ENCODE measurements at regions of chr11 and their contacts with region 1.

Region 1: GRCh38 chr11:15074206-15075161 is 1.1 kb downstream of the CALCB start:
- DNase-seq: peak; percentile 87
- H3K4me3 Mint-ChIP-seq: peak overlapping the region; percentile 4
- H3K27ac Mint-ChIP-seq: no peak overlapping the region
- H3K4me1 Mint-ChIP-seq: peaks cover 6% of the 10 kb centered on the region
- H3K27me3 Mint-ChIP-seq: no peaks in the 10 kb centered on the region
- CTCF ChIP-seq: peak; percentile 84

Region 2: DNA sequence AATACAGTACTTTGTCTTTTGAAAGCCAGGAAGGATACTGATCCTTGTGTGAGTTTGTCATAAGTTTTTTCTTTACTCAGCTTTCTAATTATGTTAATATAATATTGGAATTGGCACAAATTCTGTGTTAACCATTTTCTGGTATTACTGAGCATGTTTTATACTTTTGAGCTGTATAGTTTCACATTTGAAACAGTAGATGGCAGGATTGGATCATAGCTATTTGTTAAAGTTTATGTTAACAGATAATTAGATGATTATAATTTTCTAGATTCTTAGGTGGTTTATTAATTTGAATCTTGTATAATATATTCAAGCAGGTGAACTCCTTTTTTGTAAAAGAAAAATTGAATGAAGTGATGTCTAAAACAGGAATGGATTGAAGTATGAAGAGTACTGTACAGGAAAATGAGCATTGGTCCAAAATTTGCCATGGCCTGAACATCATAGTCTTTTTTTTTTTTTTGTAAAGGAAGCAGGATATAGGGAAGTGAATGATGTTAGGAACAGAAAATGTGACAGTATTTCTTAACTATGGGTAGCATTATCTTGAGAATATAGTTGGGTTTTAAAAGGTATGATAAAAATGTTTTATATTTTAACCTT is 284.5 kb before region 1 on chr11:
- CTCF ChIA-PET with region 1: interaction called, 76 read pairs
- POLR2A ChIA-PET with region 1: interaction called, 3 read pairs
- intact Hi-C with region 1: loop called (anchors 2 kb)
- DNase-seq: peak; percentile 21
- H3K4me3 Mint-ChIP-seq: no peak overlapping the region
- H3K27ac Mint-ChIP-seq: no peak overlapping the region
- H3K4me1 Mint-ChIP-seq: no peaks in the 10 kb centered on the region
- H3K27me3 Mint-ChIP-seq: peaks cover 27% of the 10 kb centered on the region
- CTCF ChIP-seq: peak; percentile 45

Region 3: DNA sequence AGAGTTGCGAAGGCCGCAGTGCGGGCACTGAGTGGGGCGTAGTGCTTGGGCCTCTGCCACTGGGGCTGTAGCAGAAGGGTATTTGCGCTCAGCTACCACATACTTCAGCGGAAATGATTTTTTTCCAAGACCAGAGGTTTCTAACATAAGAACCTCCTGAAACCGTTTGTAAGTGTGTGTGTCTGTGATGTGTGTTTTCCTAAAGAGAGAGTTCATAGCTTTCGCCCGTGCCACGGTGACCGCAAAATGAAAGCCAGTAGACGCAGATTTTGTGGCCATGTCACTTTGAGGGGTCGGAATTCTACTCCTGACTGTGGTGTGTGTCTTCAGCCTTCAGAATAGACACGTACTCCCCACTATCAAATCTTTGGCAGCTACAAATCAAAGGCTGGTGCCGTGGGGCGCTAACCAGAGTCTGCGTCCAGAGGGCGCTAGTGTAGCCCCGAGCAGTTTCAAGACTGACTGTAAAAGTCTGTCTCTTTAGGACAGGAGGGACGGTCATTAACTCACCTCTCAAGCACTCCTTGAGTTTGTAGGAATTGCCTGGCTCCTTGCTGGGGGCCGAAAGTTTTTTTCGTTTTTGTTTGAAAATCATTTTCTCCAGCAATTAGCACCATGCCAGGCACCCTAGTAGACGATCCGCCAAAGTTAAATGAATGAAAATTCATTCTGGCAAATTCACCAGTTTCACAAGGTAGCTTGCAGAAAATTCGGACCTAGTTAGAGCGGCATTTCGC is 99.8 kb before region 1 on chr11:
- CTCF ChIA-PET with region 1: interaction called, 6 read pairs
- POLR2A ChIA-PET with region 1: no interaction called
- intact Hi-C with region 1: loop called (anchors 1 kb)
- DNase-seq: peak; percentile 49
- H3K4me3 Mint-ChIP-seq: no peak overlapping the region
- H3K27ac Mint-ChIP-seq: no peak overlapping the region
- H3K4me1 Mint-ChIP-seq: no peaks in the 10 kb centered on the region
- H3K27me3 Mint-ChIP-seq: peaks cover 22% of the 10 kb centered on the region
- CTCF ChIP-seq: peak; percentile 52

Region 4: GRCh38 chr11:15053191-15053685 is 21.2 kb before region 1 on chr11:
- CTCF ChIA-PET with region 1: interaction called, 22 read pairs
- POLR2A ChIA-PET with region 1: no interaction called
- intact Hi-C with region 1: loop called (anchors 1 kb)
- DNase-seq: peak; percentile 94
- H3K4me3 Mint-ChIP-seq: peak overlapping the region; percentile 7
- H3K27ac Mint-ChIP-seq: peak overlapping the region; percentile 53
- H3K4me1 Mint-ChIP-seq: peaks cover 18% of the 10 kb centered on the region
- H3K27me3 Mint-ChIP-seq: no peaks in the 10 kb centered on the region
- CTCF ChIP-seq: no peak

Region 5: DNA sequence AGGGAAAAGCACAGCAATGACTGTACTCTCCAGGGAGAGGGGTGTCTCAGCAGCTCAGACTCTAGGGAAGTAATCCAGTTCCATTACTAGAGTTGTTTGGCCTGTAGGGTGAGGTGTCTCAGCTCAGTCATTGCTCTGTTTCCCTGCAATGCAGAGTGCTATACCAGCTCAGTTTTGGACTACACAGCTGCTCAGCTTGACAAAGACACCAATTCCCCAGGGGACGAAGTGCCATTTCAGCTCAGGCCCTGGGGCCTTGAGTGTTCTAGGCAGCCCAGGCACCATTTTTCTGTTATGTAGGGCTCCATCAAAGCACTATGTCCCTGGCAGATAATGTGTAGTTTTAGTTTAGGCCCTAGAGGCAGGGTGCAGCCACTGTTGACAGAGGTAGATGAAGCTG is 17.1 kb after region 1 on chr11:
- CTCF ChIA-PET with region 1: interaction called, 12 read pairs
- POLR2A ChIA-PET with region 1: interaction called, 3 read pairs
- intact Hi-C with region 1: no loop called
- DNase-seq: no peak
- H3K4me3 Mint-ChIP-seq: no peak overlapping the region
- H3K27ac Mint-ChIP-seq: no peak overlapping the region
- H3K4me1 Mint-ChIP-seq: peaks cover 12% of the 10 kb centered on the region
- H3K27me3 Mint-ChIP-seq: no peaks in the 10 kb centered on the region
- CTCF ChIP-seq: no peak

Region 6: DNA sequence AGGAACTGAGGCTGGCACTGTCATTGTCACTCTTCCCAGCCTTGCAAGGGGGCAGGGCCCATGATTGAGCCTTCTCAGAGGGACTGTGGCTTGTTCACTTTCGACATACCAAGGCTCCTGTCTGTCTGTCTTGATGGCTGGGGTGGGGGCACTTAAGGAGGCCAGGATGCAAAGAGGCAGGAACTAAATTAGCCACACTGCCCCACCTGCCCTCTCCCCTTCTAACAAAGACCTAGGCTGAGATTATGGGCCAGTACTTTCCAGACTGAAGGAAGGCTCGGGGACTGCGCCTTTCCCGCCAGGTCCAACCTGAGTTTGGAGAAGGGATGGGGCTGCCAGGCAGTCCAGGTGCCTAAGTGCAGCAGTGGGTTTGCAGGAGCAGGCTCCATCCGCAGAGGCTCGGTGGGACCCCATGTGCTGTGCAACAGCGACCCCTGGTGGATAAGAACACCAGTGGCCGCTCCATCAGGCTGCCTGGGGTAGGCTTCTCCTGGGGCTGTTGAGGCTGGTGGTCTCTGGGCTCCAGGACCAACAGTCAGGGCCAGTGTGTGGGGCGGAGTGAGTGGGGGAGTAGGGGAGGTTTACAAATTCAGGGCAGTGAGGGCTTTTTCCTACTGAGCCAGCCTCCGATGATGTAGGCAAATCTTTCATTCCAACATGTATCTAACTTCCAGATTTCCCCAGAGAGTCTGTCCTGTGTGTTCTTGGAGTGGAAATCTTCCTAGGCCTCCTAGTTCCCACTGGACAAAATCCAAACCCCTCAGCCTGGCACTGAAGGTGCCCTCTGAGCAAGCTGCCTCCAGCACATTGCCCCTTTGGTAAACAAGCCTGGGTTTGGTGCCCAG is 134.1 kb after region 1 on chr11:
- CTCF ChIA-PET with region 1: interaction called, 10 read pairs
- POLR2A ChIA-PET with region 1: no interaction called
- intact Hi-C with region 1: loop called (anchors 1 kb)
- DNase-seq: peak; percentile 71
- H3K4me3 Mint-ChIP-seq: no peak overlapping the region
- H3K27ac Mint-ChIP-seq: no peak overlapping the region
- H3K4me1 Mint-ChIP-seq: no peaks in the 10 kb centered on the region
- H3K27me3 Mint-ChIP-seq: no peaks in the 10 kb centered on the region
- CTCF ChIP-seq: peak; percentile 95